Left ventricle myocardium inferior (tissue), 1 donor: ENCODE measurements at regions of chr1 and their contacts with region 1.

Region 1: GRCh38 chr1:9874959-9875635 is 35.0 kb downstream of the CTNNBIP1 start:
- DNase-seq: peak; percentile 67
- H3K4me3 ChIP-seq: peak overlapping the region; percentile 39
- H3K27ac ChIP-seq: peak overlapping the region; percentile 83
- H3K4me1 ChIP-seq: peaks cover 45% of the 10 kb centered on the region
- H3K27me3 ChIP-seq: no peaks in the 10 kb centered on the region
- CTCF ChIP-seq: peak; percentile 95

Region 2: GRCh38 chr1:9942939-9943788 is 68.1 kb after region 1 on chr1 and contains the starts of genes LZIC and NMNAT1:
- intact Hi-C with region 1: loop called (anchors 10 kb)
- DNase-seq: peak; percentile 93
- H3K4me3 ChIP-seq: peak within 1 kb of the TSS; percentile 78
- H3K27ac ChIP-seq: peak within 1 kb of the TSS; percentile 94
- H3K4me1 ChIP-seq: peaks cover 43% of the 10 kb centered on the region
- H3K27me3 ChIP-seq: no peaks in the 10 kb centered on the region
- CTCF ChIP-seq: peak; percentile 13
- total RNA-seq, gene LZIC: 36.3 TPM
- total RNA-seq, gene NMNAT1: 22.2 TPM